ENCODE measurements at regions of chr19 and their contacts with region 1.

Region 1: GRCh38 chr19:18279516-18280273 is 1.7 kb downstream of the JUND start:
- DNase-seq: peak; percentile 98
- H3K4me3 ChIP-seq: peak overlapping the region; percentile 49 to 94 (median 83)
- H3K27ac ChIP-seq: peak overlapping the region; percentile 98 to 100 (median 100)
- H3K4me1 ChIP-seq: peaks cover 44 to 76% (median 64%) of the 10 kb centered on the region in 6 donors
- H3K27me3 ChIP-seq: no peaks in the 10 kb centered on the region
- CTCF ChIP-seq: peak; percentile 82 to 96 (median 92)
- POLR2A ChIP-seq: peak in 2 of 3 donors; percentile 72 to 84

Region 2: GRCh38 chr19:18152444-18152816 is 127.3 kb before region 1 on chr19:
- intact Hi-C with region 1: no loop called
- DNase-seq: peak; percentile 99
- H3K4me3 ChIP-seq: peak overlapping the region; percentile 53 to 92 (median 78)
- H3K27ac ChIP-seq: peak overlapping the region; percentile 95 to 99 (median 96)
- H3K4me1 ChIP-seq: peaks cover 21 to 68% (median 44%) of the 10 kb centered on the region in 6 donors
- H3K27me3 ChIP-seq: no peaks in the 10 kb centered on the region
- CTCF ChIP-seq: peak; percentile 68 to 90 (median 86)
- POLR2A ChIP-seq: peak in 1 of 3 donors; percentile 56

Region 3: DNA sequence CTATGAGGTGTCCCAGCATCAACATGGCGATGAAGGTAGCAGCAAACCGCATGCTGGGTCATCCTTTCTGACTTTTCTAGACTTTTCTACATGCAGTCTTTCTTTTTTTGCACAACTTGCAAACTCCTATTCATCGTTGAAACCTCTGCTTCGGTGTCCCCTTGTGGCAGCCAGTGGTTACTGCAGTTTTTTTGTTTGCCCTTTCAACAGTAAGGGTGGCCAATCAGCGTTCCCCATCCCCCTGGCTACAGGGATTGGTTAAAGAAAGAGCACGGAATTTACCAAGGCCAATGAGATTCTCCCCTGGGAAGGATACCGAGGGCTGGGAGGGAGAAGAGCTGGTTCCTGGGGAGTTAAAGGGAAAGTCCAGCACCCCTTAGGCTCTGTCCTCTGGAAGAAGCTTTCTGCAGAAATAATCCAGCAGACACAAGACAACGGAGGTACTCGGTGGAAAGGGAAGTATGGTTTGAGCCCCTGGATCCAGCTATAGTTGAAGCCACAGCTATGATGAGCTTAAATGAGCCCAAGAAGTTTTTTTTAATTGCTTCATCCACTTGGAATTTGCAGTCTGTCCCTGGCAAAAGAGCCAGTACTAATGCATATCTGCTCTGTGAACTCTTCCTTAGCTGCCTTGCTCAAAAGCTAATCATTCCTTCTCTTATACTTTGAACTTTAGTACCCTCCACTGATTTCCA is 48.8 kb after region 1 on chr19:
- intact Hi-C with region 1: loop called (anchors 2 kb)
- DNase-seq: peak; percentile 88
- H3K4me3 ChIP-seq: peak overlapping the region in 5 of 8 donors; percentile 14 to 57 (median 22)
- H3K27ac ChIP-seq: peak overlapping the region in 7 of 8 donors; percentile 28 to 74 (median 59)
- H3K4me1 ChIP-seq: peaks cover 13 to 30% (median 24%) of the 10 kb centered on the region in 6 donors
- H3K27me3 ChIP-seq: no peaks in the 10 kb centered on the region
- CTCF ChIP-seq: peak; percentile 91 to 99 (median 97)
- POLR2A ChIP-seq: no peak

Region 4: DNA sequence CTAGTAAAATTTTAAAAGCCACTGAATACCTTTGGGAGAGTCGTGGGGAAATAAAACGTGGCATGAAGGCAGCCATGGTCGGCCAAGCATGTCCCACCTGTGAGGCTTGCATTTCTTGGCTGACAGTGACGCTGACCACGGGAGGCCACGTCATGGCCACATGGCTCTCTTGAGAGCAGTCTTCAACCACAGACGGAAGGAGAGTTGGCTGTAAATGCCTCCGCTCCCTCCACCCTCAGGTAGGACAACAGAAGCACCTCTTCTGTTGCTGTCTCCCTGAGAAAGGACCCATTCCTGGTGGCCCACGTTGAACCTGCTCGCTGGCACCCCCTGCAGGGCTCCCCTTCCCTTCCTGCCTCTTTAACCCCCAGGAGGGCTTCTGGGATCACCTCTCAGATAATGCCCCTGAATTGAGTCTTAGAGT is 128.4 kb after region 1 on chr19:
- intact Hi-C with region 1: loop called (anchors 2 kb)
- DNase-seq: peak; percentile 84
- H3K4me3 ChIP-seq: no peak overlapping the region
- H3K27ac ChIP-seq: no peak overlapping the region
- H3K4me1 ChIP-seq: peaks cover 0 to 43% (median 20%) of the 10 kb centered on the region in 6 donors
- H3K27me3 ChIP-seq: peaks cover 0 to 21% (median 0%) of the 10 kb centered on the region in 7 donors
- CTCF ChIP-seq: peak in 10 of 11 experiments; percentile 17 to 70 (median 53)
- POLR2A ChIP-seq: no peak

Measured in spleen (tissue), 13 donors.